Right cardiac atrium (tissue), 5 donors: ENCODE measurements at regions of chr2 and their contacts with region 1.

Region 1: GRCh38 chr2:200306196-200306930 is at the start of gene SPATS2L:
- DNase-seq: peak; percentile 85 to 95 (median 93)
- ATAC-seq: peak; percentile 90 to 91
- H3K4me3 ChIP-seq: peak within 1 kb of the TSS; percentile 99
- H3K27ac ChIP-seq: peak within 1 kb of the TSS; percentile 69
- H3K4me1 ChIP-seq: peaks cover 3% of the 10 kb centered on the region
- H3K27me3 ChIP-seq: no peaks in the 10 kb centered on the region
- total RNA-seq, gene SPATS2L: 115 to 147 (median 124) TPM

Region 2: GRCh38 chr2:199979832-199980628 is 326.3 kb before region 1 on chr2:
- intact Hi-C with region 1: loop called in 2 of 4 experiments (anchors 5 to 10 kb)
- DNase-seq: peak; percentile 84 to 96 (median 90)
- ATAC-seq: peak; percentile 78 to 86
- H3K4me3 ChIP-seq: no peak overlapping the region
- H3K27ac ChIP-seq: no peak overlapping the region
- H3K4me1 ChIP-seq: no peaks in the 10 kb centered on the region
- H3K27me3 ChIP-seq: no peaks in the 10 kb centered on the region

Region 3: GRCh38 chr2:199994371-199994770 is 312.0 kb before region 1 on chr2:
- intact Hi-C with region 1: loop called in 2 of 4 experiments (anchors 10 kb)
- DNase-seq: no peak
- ATAC-seq: no peak
- H3K4me3 ChIP-seq: no peak overlapping the region
- H3K27ac ChIP-seq: no peak overlapping the region
- H3K4me1 ChIP-seq: no peaks in the 10 kb centered on the region
- H3K27me3 ChIP-seq: no peaks in the 10 kb centered on the region

Region 4: GRCh38 chr2:200360364-200360763 is 54.0 kb after region 1 on chr2:
- intact Hi-C with region 1: no loop called
- DNase-seq: no peak
- ATAC-seq: no peak
- H3K4me3 ChIP-seq: no peak overlapping the region
- H3K27ac ChIP-seq: no peak overlapping the region
- H3K4me1 ChIP-seq: peaks cover 7% of the 10 kb centered on the region
- H3K27me3 ChIP-seq: no peaks in the 10 kb centered on the region

Region 5: DNA sequence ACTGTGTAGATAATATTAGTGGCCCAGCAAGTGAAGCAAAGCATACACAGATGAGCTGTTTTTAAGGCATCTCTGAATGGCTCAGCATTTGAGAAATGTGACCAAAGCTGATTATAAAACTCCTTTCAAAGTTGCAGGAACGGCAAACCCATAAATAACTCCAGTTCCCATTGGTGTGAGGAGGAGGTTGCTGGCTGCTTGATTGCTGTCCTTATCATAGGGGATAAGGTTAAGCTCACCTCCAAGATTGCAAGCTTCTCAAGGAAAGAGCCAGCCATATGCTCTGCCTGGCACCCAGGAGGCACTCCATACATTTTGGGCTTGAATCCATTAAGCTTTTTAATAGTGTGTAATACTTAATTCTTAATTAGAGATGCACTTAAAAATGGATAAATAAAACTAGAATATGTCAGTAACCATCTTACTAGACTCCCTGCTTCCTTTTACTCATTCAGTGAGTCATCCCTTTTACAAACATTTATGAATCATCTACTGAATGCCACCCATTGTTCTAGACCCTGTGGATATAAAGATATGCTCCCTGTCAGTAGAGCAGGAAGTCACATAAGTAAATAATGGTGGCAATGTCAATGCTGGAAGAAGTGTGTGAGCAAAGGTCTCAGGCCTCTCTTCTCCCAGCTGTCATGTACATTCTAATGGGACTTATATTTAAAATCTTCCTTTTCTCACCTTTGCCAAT is 99.4 kb after region 1 on chr2:
- intact Hi-C with region 1: loop called in 1 of 4 experiments (anchors 10 kb)
- DNase-seq: no peak
- ATAC-seq: peak; percentile 76 to 94
- H3K4me3 ChIP-seq: no peak overlapping the region
- H3K27ac ChIP-seq: peak overlapping the region; percentile 43
- H3K4me1 ChIP-seq: peaks cover 9% of the 10 kb centered on the region
- H3K27me3 ChIP-seq: no peaks in the 10 kb centered on the region

Region 6: GRCh38 chr2:200483729-200484198 is 177.4 kb after region 1 on chr2:
- intact Hi-C with region 1: loop called (anchors 10 kb)
- DNase-seq: no peak
- ATAC-seq: peak; percentile 27 to 55
- H3K4me3 ChIP-seq: no peak overlapping the region
- H3K27ac ChIP-seq: no peak overlapping the region
- H3K4me1 ChIP-seq: no peaks in the 10 kb centered on the region
- H3K27me3 ChIP-seq: no peaks in the 10 kb centered on the region